Activated B cell treated with CpG ODN at 0.5 μM for 24 hours (primary cell): ENCODE measurements at regions of chr16 and their contacts with region 1.

Region 1: GRCh38 chr16:81863630-81864352 is 84.7 kb downstream of the PLCG2 start:
- DNase-seq: no peak
- ATAC-seq: peak; percentile 73
- H3K4me3 Mint-ChIP-seq: peak overlapping the region; percentile 71
- H3K27ac Mint-ChIP-seq: peak overlapping the region; percentile 88
- H3K4me1 Mint-ChIP-seq: peaks cover 74% of the 10 kb centered on the region
- H3K27me3 Mint-ChIP-seq: no peaks in the 10 kb centered on the region
- CTCF ChIP-seq: no peak

Region 2: DNA sequence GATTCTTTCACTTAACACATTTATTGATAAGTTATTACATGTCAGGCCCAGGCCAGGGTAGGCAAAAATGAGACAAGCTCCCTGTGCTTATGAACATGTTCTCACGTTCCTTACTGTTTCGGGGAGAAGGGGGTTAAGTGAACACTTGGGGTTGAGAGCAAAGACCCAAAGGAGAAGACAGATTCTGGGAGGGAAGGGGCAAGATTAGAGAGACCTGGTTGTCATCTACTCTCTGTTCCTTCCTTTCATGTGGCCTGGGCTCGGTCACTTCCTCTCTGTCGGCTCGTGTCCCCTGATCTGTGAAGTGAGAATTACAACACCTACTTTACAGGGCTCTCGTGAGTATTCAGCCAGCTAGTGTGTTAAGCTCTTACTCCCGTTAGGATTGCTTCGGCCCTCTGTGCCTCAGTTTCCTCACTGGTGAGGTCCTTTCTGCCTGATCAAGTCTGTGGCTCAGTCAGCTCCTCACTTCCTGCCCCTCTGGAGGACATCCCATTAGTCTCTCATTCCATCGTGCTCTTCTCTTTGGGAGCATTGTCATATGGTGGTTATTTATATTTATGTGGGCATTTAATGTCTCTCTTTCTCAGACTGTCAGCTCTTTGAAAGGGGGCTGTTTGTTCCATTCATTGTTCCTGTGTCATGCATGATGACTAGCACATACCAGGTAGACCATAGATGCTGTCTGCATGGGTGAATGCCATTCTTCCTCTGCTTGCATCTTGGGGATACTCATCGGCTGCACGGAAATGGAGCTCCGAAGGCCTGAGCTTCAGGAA is 45.8 kb before region 1 on chr16:
- CTCF ChIA-PET with region 1: no interaction called
- POLR2A ChIA-PET with region 1: interaction called, 11 read pairs
- intact Hi-C with region 1: no loop called
- DNase-seq: no peak
- ATAC-seq: peak; percentile 65
- H3K4me3 Mint-ChIP-seq: peak overlapping the region; percentile 66
- H3K27ac Mint-ChIP-seq: peak overlapping the region; percentile 96
- H3K4me1 Mint-ChIP-seq: peaks cover 98% of the 10 kb centered on the region
- H3K27me3 Mint-ChIP-seq: no peaks in the 10 kb centered on the region
- CTCF ChIP-seq: no peak

Region 3: GRCh38 chr16:81928975-81929374 is 65.2 kb after region 1 on chr16:
- CTCF ChIA-PET with region 1: no interaction called
- POLR2A ChIA-PET with region 1: no interaction called
- intact Hi-C with region 1: no loop called
- DNase-seq: no peak
- ATAC-seq: no peak
- H3K4me3 Mint-ChIP-seq: no peak overlapping the region
- H3K27ac Mint-ChIP-seq: no peak overlapping the region
- H3K4me1 Mint-ChIP-seq: no peaks in the 10 kb centered on the region
- H3K27me3 Mint-ChIP-seq: no peaks in the 10 kb centered on the region
- CTCF ChIP-seq: no peak